Heart right ventricle (tissue), 16 donors: ENCODE measurements at regions of chr5 and their contacts with region 1.

Region 1: GRCh38 chr5:177390363-177391300 is 6.4 kb downstream of the SLC34A1 start:
- DNase-seq: peak; percentile 69 to 82
- ATAC-seq: peak; percentile 75 to 94 (median 86)
- H3K4me3 ChIP-seq: no peak overlapping the region
- H3K27ac ChIP-seq: peak overlapping the region in 1 of 10 donors; percentile 61
- H3K4me1 ChIP-seq: peaks cover 0 to 30% (median 0%) of the 10 kb centered on the region in 9 donors
- H3K27me3 ChIP-seq: peaks cover 0 to 40% (median 11%) of the 10 kb centered on the region in 7 donors
- CTCF ChIP-seq: peak; percentile 91 to 99 (median 99)

Region 2: GRCh38 chr5:177317959-177318377 is 72.7 kb before region 1 on chr5:
- intact Hi-C with region 1: loop called in 1 of 10 experiments (anchors 5 kb)
- DNase-seq: peak in 1 of 2 donors; percentile 70
- ATAC-seq: peak in 7 of 8 donors; percentile 45 to 67 (median 57)
- H3K4me3 ChIP-seq: no peak overlapping the region
- H3K27ac ChIP-seq: no peak overlapping the region
- H3K4me1 ChIP-seq: peaks cover 0 to 14% (median under 1%) of the 10 kb centered on the region in 9 donors
- H3K27me3 ChIP-seq: no peaks in the 10 kb centered on the region
- CTCF ChIP-seq: peak; percentile 72 to 91 (median 85)